HepG2 (cell line): ENCODE measurements at regions of chr6 and their contacts with region 1.

Region 1: DNA sequence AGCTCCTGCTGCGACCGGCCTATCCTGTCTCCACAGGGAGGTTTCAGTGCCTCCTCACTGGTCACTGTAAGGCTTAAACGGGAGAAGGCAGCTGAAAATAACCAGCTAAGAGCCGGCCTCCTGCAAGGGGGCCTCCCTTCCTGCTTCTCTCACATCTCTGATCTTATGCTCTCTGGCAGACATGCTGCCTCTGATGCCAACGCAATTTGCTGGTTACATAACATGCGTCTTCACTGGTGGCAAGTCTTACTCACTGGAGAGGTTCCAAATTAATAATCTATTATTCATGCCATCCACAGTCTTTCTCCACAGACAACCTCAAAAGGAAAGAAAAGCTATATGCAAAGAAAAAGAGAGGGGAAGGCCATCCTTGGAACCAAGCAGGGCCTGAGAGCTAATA is 91.8 kb upstream of the LRFN2 start:
- DNase-seq: no peak
- ATAC-seq: no peak
- H3K4me3 ChIP-seq: no peak overlapping the region
- H3K27ac ChIP-seq: no peak overlapping the region
- H3K4me1 ChIP-seq: no peaks in the 10 kb centered on the region
- H3K27me3 ChIP-seq: peaks cover 0 to 6% of the 10 kb centered on the region in 2 experiments; a peak in 1 of 5 replicates
- CTCF ChIP-seq: no peak
- EP300 ChIP-seq: no peak
- POLR2A ChIP-seq: no peak
- RAD21 ChIP-seq: no peak

Region 2: GRCh38 chr6:40648944-40649343 is 30.0 kb before region 1 on chr6:
- CTCF ChIA-PET with region 1: no interaction called
- POLR2A ChIA-PET with region 1: no interaction called
- in situ Hi-C with region 1: no loop called
- intact Hi-C with region 1: loop called (anchors 1 kb)
- DNase-seq: no peak
- ATAC-seq: no peak
- H3K4me3 ChIP-seq: no peak overlapping the region
- H3K27ac ChIP-seq: no peak overlapping the region
- H3K4me1 ChIP-seq: no peaks in the 10 kb centered on the region
- H3K27me3 ChIP-seq: peaks cover 0 to 22% of the 10 kb centered on the region in 2 experiments; a peak in 2 of 5 replicates
- CTCF ChIP-seq: no peak
- EP300 ChIP-seq: no peak
- POLR2A ChIP-seq: no peak
- RAD21 ChIP-seq: no peak

Region 3: DNA sequence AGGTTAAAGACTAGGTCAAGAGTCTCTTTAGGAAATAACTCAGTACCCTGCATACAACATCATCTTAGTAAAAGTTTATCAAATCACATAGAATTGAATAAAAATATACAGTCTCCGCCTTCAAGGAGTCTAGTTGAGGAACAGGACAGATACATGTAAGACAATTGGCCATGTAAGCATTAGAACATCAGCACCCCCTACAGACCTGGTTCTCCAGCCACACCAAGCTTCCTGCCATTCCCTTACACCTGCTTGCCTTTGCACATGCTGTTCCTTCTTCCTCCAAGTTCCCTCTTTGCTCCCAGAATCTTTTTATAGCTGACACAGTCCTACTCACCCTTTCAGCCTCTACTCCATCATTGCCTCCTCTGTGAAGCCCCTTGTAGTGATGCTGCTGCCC is 96.0 kb after region 1 on chr6:
- CTCF ChIA-PET with region 1: no interaction called
- POLR2A ChIA-PET with region 1: no interaction called
- in situ Hi-C with region 1: no loop called
- intact Hi-C with region 1: no loop called
- DNase-seq: no peak
- ATAC-seq: no peak
- H3K4me3 ChIP-seq: no peak overlapping the region
- H3K27ac ChIP-seq: no peak overlapping the region
- H3K4me1 ChIP-seq: no peaks in the 10 kb centered on the region
- H3K27me3 ChIP-seq: peaks cover 0 to 14% of the 10 kb centered on the region in 2 experiments; a peak in 1 of 5 replicates
- CTCF ChIP-seq: 0 out of 2 replicates have a peak, but pooled peaks have one; percentile 10
- EP300 ChIP-seq: no peak
- POLR2A ChIP-seq: no peak
- RAD21 ChIP-seq: no peak